ENCODE measurements at regions of chr5 and their contacts with region 1.

Region 1: DNA sequence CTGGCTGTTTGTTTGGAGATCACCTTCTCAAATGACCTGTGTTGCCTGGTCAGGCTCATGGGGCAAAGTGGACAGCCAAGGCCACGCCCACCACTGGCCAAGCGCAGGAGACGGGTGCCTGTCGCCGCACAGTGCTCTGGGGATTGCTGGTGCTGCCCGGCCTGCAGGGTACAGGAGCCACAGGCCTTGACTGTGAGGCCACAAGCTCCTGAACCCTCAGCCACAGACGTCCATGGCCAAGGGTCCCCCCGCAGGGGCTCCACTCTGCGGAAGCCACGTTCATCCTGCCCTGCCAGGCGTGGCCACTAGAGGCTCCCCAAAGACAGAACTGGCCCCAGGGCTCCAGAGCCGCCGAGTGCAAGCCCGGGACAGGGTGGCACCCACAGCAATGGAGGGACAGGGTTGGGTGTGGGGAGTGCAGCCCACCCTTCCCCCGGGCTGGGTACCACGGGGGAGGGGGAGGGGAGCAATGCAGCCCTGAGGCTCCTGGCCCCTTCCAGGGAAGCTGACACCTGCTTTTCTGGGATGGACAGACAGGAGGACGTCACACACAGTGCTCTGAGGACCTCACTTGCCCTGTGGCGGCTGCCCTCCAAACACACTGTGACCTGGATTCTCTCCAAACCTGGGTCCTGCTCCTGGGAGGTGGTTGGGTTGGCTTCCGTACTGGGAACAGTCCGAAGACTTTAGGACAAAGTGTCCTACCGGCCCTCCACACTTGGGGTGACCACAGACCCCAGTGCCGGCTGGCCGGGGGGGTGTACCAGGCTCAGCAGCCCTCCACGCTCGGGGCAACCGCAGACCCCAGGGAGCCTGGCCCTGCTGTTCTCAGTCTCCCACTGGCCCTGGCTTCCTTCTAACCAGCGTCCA is 21.5 kb downstream of the TPPP start:
- DNase-seq: peak; percentile 73 to 78
- H3K4me3 ChIP-seq: no peak overlapping the region
- H3K27ac ChIP-seq: peak overlapping the region in 2 of 3 donors; percentile 39 to 64
- H3K4me1 ChIP-seq: peaks cover 24 to 42% of the 10 kb centered on the region in 2 donors
- H3K27me3 ChIP-seq: no peaks in the 10 kb centered on the region
- CTCF ChIP-seq: peak; percentile 84 to 93 (median 90)
- POLR2A ChIP-seq: no peak

Region 2: GRCh38 chr5:53281-54174 is 618.2 kb before region 1 on chr5:
- intact Hi-C with region 1: no loop called
- DNase-seq: peak; percentile 81 to 84
- H3K4me3 ChIP-seq: peak overlapping the region in 2 of 3 donors; percentile 25 to 51
- H3K27ac ChIP-seq: no peak overlapping the region
- H3K4me1 ChIP-seq: peaks cover 6 to 13% of the 10 kb centered on the region in 2 donors
- H3K27me3 ChIP-seq: no peaks in the 10 kb centered on the region
- CTCF ChIP-seq: peak in 3 of 6 experiments; percentile 4 to 46 (median 32)
- POLR2A ChIP-seq: peak in 1 of 2 donors; percentile 51

Region 3: GRCh38 chr5:343461-344401 is 328.0 kb before region 1 on chr5:
- intact Hi-C with region 1: no loop called
- DNase-seq: peak; percentile 56 to 60
- H3K4me3 ChIP-seq: peak overlapping the region in 1 of 3 donors; percentile 26
- H3K27ac ChIP-seq: no peak overlapping the region
- H3K4me1 ChIP-seq: no peaks in the 10 kb centered on the region
- H3K27me3 ChIP-seq: no peaks in the 10 kb centered on the region
- CTCF ChIP-seq: no peak
- POLR2A ChIP-seq: no peak

Region 4: GRCh38 chr5:586751-587285 is 84.9 kb before region 1 on chr5:
- intact Hi-C with region 1: no loop called
- DNase-seq: no peak
- H3K4me3 ChIP-seq: no peak overlapping the region
- H3K27ac ChIP-seq: no peak overlapping the region
- H3K4me1 ChIP-seq: no peaks in the 10 kb centered on the region
- H3K27me3 ChIP-seq: no peaks in the 10 kb centered on the region
- CTCF ChIP-seq: no peak
- POLR2A ChIP-seq: no peak

Region 5: DNA sequence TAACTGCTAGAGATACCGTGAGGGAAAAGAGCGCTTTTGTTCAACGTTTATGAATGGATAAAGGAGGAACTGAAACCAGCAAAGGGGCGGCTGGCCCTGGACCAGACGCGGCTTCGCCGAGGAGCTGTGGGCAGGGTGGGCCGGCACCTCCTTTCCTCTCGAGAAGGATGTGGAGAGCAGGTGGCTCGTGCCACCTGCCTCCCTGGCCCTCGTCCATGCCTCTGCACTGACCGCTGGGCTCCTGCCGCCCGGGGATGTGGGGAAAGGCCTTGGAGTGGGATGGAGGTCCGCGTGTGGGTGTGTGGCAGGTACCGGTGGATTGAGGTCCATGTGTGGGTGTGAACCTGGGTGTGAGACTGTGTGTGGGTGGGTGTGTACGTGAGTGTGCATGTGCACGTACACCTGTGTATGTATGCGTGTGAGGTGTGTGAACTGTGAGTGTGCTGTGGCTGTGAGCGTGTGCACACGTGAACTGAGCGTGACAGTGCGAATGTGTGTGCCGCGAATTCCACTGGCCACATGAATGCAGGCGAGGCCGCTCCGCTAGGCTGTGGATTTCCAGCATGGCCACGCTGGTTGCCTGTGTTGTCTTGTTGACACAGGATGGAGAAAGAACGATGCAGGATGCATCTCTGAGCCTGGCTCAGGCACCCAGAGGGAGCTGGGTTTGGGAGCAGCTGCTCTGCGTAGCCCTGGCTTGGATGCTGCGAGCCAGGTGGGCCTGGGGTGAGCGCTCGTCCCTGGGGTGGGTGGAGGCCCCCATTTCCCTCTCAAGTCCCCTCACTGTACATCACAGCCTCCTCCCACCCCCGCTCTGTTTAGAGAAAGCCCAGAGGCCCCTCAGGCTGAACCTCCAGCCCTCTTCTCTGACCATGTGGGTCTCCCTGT is 63.9 kb before region 1 on chr5:
- intact Hi-C with region 1: no loop called
- DNase-seq: no peak
- H3K4me3 ChIP-seq: no peak overlapping the region
- H3K27ac ChIP-seq: no peak overlapping the region
- H3K4me1 ChIP-seq: peaks cover 0 to 5% of the 10 kb centered on the region in 2 donors
- H3K27me3 ChIP-seq: no peaks in the 10 kb centered on the region
- CTCF ChIP-seq: no peak
- POLR2A ChIP-seq: no peak

Region 6: GRCh38 chr5:776792-777711 is 105.4 kb after region 1 on chr5:
- intact Hi-C with region 1: loop called (anchors 10 kb)
- DNase-seq: no peak
- H3K4me3 ChIP-seq: no peak overlapping the region
- H3K27ac ChIP-seq: no peak overlapping the region
- H3K4me1 ChIP-seq: no peaks in the 10 kb centered on the region
- H3K27me3 ChIP-seq: no peaks in the 10 kb centered on the region
- CTCF ChIP-seq: no peak
- POLR2A ChIP-seq: no peak

Region 7: GRCh38 chr5:902129-902916 is 230.6 kb after region 1 on chr5:
- intact Hi-C with region 1: loop called (anchors 2 kb)
- DNase-seq: peak in 1 of 2 donors; percentile 12
- H3K4me3 ChIP-seq: no peak overlapping the region
- H3K27ac ChIP-seq: no peak overlapping the region
- H3K4me1 ChIP-seq: peaks cover 0 to 7% of the 10 kb centered on the region in 2 donors
- H3K27me3 ChIP-seq: no peaks in the 10 kb centered on the region
- CTCF ChIP-seq: no peak
- POLR2A ChIP-seq: no peak

Measured in thyroid gland (tissue), 4 donors.